ENCODE measurements at regions of chr6 and their contacts with region 1.

Region 1: DNA sequence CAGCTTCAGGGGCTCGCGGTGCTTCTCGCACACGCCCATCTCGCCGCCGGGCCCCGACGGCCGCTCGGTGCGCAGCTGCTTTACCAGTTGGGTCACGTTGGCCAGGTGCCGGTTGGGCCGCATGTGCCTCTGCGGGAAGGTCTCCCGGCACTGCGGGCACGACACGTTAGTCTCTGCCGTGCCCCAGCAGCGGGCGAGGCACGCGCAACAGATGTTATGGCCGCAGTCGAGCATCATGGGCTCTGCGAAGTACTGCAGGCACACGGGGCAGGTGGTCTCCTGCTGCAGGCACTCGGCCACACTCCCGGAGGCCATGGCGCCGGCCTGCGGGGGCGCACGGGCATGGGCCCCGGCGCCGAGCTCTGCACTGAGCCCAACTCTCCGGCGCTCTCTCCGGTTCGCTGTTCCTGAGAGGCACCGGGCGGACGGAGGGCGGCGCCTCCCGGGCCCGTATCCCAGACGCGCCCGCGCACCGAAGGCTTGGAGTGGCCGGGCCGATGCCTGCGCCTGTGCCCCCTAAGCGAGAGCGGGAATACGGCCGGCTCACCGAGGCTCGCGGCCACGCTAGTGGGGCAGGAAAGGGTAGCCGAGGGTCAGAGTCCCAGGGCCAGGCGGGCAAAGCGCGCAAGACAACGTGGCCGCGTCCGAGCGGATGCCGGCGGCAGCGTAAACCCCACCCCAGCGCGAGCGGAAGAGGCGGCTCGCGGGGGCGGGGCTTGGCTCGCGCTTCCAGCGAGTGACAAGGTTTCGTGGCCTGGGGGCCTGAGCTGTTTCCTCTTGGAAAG is at the start of gene TRIM27:
- DNase-seq: peak; percentile 84
- ATAC-seq: peak; percentile 89
- H3K4me3 Mint-ChIP-seq: peak within 1 kb of the TSS; percentile 94
- H3K27ac Mint-ChIP-seq: peak within 1 kb of the TSS; percentile 94
- H3K4me1 Mint-ChIP-seq: peaks cover 39% of the 10 kb centered on the region
- H3K27me3 Mint-ChIP-seq: no peaks in the 10 kb centered on the region
- CTCF ChIP-seq: no peak
- total RNA-seq, gene TRIM27: 45.6 to 46.4 TPM

Region 2: GRCh38 chr6:28802417-28803336 is 120.8 kb before region 1 on chr6:
- CTCF ChIA-PET with region 1: no interaction called
- POLR2A ChIA-PET with region 1: no interaction called
- intact Hi-C with region 1: no loop called
- DNase-seq: peak; percentile 51
- ATAC-seq: peak; percentile 74
- H3K4me3 Mint-ChIP-seq: no peak overlapping the region
- H3K27ac Mint-ChIP-seq: no peak overlapping the region
- H3K4me1 Mint-ChIP-seq: peaks cover 4% of the 10 kb centered on the region
- H3K27me3 Mint-ChIP-seq: peaks cover 56% of the 10 kb centered on the region
- CTCF ChIP-seq: no peak

Region 3: GRCh38 chr6:28863604-28864320 is 59.7 kb before region 1 on chr6:
- CTCF ChIA-PET with region 1: interaction called, 4 read pairs
- POLR2A ChIA-PET with region 1: interaction called, 20 read pairs
- intact Hi-C with region 1: no loop called
- DNase-seq: peak; percentile 89
- ATAC-seq: peak; percentile 54
- H3K4me3 Mint-ChIP-seq: peak overlapping the region; percentile 89
- H3K27ac Mint-ChIP-seq: peak overlapping the region; percentile 84
- H3K4me1 Mint-ChIP-seq: peaks cover 30% of the 10 kb centered on the region
- H3K27me3 Mint-ChIP-seq: peaks cover 3% of the 10 kb centered on the region
- CTCF ChIP-seq: no peak

Region 4: GRCh38 chr6:28880894-28881780 is 42.4 kb before region 1 on chr6:
- CTCF ChIA-PET with region 1: interaction called, 3 read pairs
- POLR2A ChIA-PET with region 1: interaction called, 10 read pairs
- intact Hi-C with region 1: no loop called
- DNase-seq: peak; percentile 82
- ATAC-seq: no peak
- H3K4me3 Mint-ChIP-seq: peak overlapping the region; percentile 81
- H3K27ac Mint-ChIP-seq: peak overlapping the region; percentile 77
- H3K4me1 Mint-ChIP-seq: peaks cover 45% of the 10 kb centered on the region
- H3K27me3 Mint-ChIP-seq: peaks cover 1% of the 10 kb centered on the region
- CTCF ChIP-seq: no peak

Region 5: DNA sequence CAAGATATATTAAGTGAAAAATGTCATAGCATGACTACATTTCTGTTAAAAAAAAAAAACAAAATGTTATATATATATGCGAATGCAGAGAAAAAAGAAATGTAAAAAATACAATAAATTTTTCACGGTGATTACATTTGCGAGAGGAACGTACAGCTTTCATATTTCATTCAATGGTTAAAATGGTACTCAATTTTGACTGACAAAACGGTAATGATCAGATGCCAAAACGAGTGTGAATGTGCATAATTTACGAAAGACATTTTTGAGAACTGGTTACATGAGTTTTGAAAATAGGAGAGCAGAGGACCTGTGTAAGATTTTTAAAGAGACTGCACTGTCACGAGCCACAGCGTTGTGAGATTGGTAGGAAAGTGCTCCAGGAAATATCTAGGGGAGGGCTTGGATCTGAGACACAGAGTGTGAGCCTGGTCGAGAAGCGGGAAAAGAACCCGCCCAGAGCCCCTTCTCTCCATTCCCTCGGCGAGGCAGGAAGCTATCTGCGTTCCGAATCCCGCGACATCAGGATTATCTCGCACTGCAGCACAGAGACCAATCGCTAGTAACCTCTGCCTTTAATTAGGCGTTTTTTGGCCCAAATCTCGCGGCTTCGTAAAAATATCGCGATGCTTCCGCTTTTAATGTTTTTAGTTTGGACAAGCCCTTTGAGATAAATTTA is 28.2 kb before region 1 on chr6:
- CTCF ChIA-PET with region 1: interaction called, 3 read pairs
- POLR2A ChIA-PET with region 1: interaction called, 33 read pairs
- intact Hi-C with region 1: no loop called
- DNase-seq: peak; percentile 98
- ATAC-seq: peak; percentile 79
- H3K4me3 Mint-ChIP-seq: peak overlapping the region; percentile 96
- H3K27ac Mint-ChIP-seq: peak overlapping the region; percentile 95
- H3K4me1 Mint-ChIP-seq: peaks cover 5% of the 10 kb centered on the region
- H3K27me3 Mint-ChIP-seq: peaks cover 2% of the 10 kb centered on the region
- CTCF ChIP-seq: no peak

Region 6: GRCh38 chr6:28910902-28911690 is 12.4 kb before region 1 on chr6:
- CTCF ChIA-PET with region 1: interaction called, 6 read pairs
- POLR2A ChIA-PET with region 1: interaction called, 12 read pairs
- intact Hi-C with region 1: no loop called
- DNase-seq: no peak
- ATAC-seq: no peak
- H3K4me3 Mint-ChIP-seq: no peak overlapping the region
- H3K27ac Mint-ChIP-seq: no peak overlapping the region
- H3K4me1 Mint-ChIP-seq: peaks cover 12% of the 10 kb centered on the region
- H3K27me3 Mint-ChIP-seq: no peaks in the 10 kb centered on the region
- CTCF ChIP-seq: no peak

Region 7: DNA sequence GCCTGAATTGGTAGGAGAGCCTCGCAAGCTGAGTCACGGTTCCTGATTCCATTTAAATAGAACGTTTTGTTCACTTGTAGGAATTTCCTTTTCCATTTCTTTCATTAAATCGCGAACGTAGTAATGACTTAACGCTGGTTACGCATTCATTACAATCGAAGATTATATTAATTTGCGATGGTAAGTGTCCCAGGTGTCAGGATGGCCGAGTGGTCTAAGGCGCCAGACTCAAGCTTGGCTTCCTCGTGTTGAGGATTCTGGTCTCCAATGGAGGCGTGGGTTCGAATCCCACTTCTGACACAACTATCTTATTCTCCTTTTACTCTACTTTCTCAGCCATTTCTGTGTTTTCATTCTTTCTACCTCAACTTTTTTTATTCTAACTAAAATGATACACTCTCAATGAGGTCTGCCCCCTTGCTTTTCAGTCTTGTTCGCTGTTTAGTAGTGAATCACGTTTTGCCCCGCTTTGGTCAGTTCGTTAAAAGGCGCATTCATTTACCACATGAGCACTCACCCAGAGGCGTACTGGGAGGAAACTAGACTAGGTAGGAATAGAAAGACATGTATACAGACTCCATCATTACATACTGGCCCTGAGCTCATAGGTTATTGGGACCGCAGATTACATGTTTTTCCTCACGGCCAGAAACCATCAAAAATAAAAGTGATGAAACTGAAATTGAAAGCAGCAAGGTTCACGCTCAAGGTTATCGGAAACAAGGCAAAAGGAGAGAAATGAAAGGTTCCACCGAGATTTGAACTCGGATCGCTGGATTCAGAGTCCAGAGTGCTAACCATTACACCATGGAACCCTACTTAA is 17.6 kb after region 1 on chr6:
- CTCF ChIA-PET with region 1: interaction called, 10 read pairs
- POLR2A ChIA-PET with region 1: interaction called, 34 read pairs
- intact Hi-C with region 1: no loop called
- DNase-seq: peak; percentile 89
- ATAC-seq: peak; percentile 69
- H3K4me3 Mint-ChIP-seq: peak overlapping the region; percentile 83
- H3K27ac Mint-ChIP-seq: peak overlapping the region; percentile 99
- H3K4me1 Mint-ChIP-seq: peaks cover 40% of the 10 kb centered on the region
- H3K27me3 Mint-ChIP-seq: peaks cover 2% of the 10 kb centered on the region
- CTCF ChIP-seq: no peak

Region 8: GRCh38 chr6:28981833-28982475 is 58.4 kb after region 1 on chr6:
- CTCF ChIA-PET with region 1: interaction called, 3 read pairs
- POLR2A ChIA-PET with region 1: interaction called, 13 read pairs
- intact Hi-C with region 1: no loop called
- DNase-seq: peak; percentile 77
- ATAC-seq: peak; percentile 48
- H3K4me3 Mint-ChIP-seq: peak overlapping the region; percentile 84
- H3K27ac Mint-ChIP-seq: peak overlapping the region; percentile 91
- H3K4me1 Mint-ChIP-seq: peaks cover 53% of the 10 kb centered on the region
- H3K27me3 Mint-ChIP-seq: peaks cover 38% of the 10 kb centered on the region
- CTCF ChIP-seq: no peak

Measured in activated CD8-positive, alpha-beta T cell treated with anti-CD3 and anti-CD28 coated beads for 36 hours (primary cell).